Activated B cell treated with CpG ODN at 0.5 μM for 24 hours (primary cell): ENCODE measurements at regions of chr14 and their contacts with region 1.

Region 1: DNA sequence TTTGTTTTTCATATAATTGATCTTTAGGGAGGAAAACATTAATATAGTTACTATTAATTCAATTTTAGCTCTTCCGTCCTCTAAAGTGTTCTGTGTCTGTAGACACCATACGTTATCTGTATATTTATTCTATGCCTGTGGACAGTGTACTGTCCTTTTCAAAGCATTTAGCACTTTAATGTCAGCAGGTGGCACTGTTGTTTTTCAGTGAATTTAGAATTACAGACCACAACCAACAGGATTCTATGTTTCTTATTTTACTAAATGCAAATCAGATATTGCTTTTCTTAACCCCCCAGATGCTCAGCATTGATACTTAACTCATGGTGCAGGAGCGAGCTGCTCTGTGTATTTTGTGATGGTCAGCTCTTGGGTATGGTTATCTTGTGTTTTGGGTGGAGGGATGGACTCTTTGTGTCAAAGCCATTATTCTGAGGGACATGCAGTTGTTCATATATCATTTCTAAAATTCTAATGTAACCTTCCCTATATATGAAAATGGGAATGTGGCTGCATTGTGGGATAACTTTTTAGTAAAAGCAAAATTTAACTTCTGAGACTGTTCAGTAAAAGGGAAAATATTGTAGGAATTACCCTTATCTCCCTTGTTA is 65.2 kb downstream of the PAPOLA start:
- DNase-seq: no peak
- ATAC-seq: peak; percentile 42
- H3K4me3 Mint-ChIP-seq: no peak overlapping the region
- H3K27ac Mint-ChIP-seq: no peak overlapping the region
- H3K4me1 Mint-ChIP-seq: peaks cover 3% of the 10 kb centered on the region
- H3K27me3 Mint-ChIP-seq: no peaks in the 10 kb centered on the region
- CTCF ChIP-seq: no peak

Region 2: GRCh38 chr14:96525452-96525851 is 41.9 kb before region 1 on chr14:
- CTCF ChIA-PET with region 1: no interaction called
- POLR2A ChIA-PET with region 1: no interaction called
- intact Hi-C with region 1: loop called (anchors 5 kb)
- DNase-seq: no peak
- ATAC-seq: no peak
- H3K4me3 Mint-ChIP-seq: no peak overlapping the region
- H3K27ac Mint-ChIP-seq: no peak overlapping the region
- H3K4me1 Mint-ChIP-seq: no peaks in the 10 kb centered on the region
- H3K27me3 Mint-ChIP-seq: no peaks in the 10 kb centered on the region
- CTCF ChIP-seq: no peak

Region 3: DNA sequence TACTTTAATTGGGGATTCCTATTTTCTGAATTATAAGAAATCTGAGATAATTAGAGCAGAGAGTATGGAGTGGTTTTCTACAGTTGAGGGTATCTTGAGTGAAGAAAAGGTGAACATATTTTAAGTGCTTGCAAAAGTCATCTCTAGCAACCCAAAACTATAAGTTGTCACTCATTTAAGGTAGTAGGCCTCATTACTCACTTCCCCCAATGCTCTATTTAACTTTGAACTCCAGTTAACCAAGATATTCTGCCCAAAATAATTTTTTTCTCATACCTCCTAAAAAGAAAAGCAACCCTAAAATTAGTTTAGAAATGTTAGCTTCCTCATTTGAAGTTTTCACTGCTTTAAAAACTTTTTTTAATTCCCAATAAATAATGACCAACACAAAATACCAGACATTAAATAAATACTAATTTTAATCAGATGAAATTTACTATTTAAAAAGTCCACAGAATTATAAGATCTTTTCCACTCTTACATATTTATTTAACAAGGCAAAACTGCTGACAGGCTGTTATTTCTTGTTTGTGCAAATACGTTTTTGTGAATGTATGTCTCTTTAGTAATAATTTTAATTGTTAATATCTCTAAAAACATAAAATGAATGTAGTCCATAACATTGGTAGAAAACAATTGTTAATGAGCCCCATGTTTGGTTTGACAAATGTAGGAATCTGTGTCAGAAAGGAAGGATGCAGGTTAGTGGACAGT is 277.6 kb after region 1 on chr14:
- CTCF ChIA-PET with region 1: no interaction called
- POLR2A ChIA-PET with region 1: no interaction called
- intact Hi-C with region 1: no loop called
- DNase-seq: no peak
- ATAC-seq: no peak
- H3K4me3 Mint-ChIP-seq: no peak overlapping the region
- H3K27ac Mint-ChIP-seq: no peak overlapping the region
- H3K4me1 Mint-ChIP-seq: peaks cover 8% of the 10 kb centered on the region
- H3K27me3 Mint-ChIP-seq: no peaks in the 10 kb centered on the region
- CTCF ChIP-seq: no peak

Region 4: GRCh38 chr14:96962337-96962736 is 394.9 kb after region 1 on chr14:
- CTCF ChIA-PET with region 1: no interaction called
- POLR2A ChIA-PET with region 1: no interaction called
- intact Hi-C with region 1: no loop called
- DNase-seq: no peak
- ATAC-seq: peak; percentile 64
- H3K4me3 Mint-ChIP-seq: peak overlapping the region; percentile 63
- H3K27ac Mint-ChIP-seq: peak overlapping the region; percentile 89
- H3K4me1 Mint-ChIP-seq: peaks cover 56% of the 10 kb centered on the region
- H3K27me3 Mint-ChIP-seq: no peaks in the 10 kb centered on the region
- CTCF ChIP-seq: no peak